Tibial artery (tissue), 4 donors: ENCODE measurements at regions of chr1 and their contacts with region 1.

Region 1: GRCh38 chr1:170471398-170472053 is 60.4 kb upstream of the GORAB start:
- DNase-seq: no peak
- H3K4me3 ChIP-seq: no peak overlapping the region
- H3K27ac ChIP-seq: no peak overlapping the region
- H3K4me1 ChIP-seq: peaks cover 0 to 8% (median 2%) of the 10 kb centered on the region in 4 donors
- H3K27me3 ChIP-seq: no peaks in the 10 kb centered on the region
- CTCF ChIP-seq: no peak

Region 2: DNA sequence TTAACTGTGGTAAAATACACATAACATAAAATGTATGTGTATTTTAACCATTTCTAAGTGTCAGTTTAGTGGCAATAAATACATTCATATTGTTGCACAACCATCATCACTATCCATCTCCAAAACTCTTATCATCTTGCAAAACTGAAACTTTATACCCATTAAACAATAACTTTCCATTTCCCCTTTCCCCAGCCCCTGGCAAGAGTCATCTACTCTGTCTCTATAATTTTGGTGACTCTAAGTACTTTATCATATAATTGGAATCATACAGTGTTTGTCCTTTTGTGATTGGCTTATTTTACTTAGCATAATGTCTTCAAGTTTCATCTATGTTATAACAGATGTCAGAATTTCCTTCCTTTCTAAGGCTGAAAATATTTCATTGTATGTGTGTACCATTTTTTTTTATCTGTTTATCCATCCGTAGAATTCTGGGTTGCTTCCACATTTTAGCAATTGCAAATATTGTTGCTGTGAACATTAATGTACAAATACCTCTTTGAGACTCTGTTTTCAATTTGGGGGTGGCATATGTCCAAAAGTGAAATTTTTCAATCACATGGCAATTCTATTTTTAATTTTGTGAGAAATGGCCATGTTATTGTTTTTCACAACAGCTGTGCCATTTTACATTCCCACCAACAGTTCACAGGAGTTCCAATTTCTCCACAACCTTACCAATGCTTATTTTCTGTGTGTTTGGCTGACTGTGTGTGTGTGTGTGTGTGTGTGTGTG is 93.5 kb before region 1 on chr1:
- intact Hi-C with region 1: loop called (anchors 5 kb)
- DNase-seq: no peak
- H3K4me3 ChIP-seq: no peak overlapping the region
- H3K27ac ChIP-seq: no peak overlapping the region
- H3K4me1 ChIP-seq: peaks cover 0 to 39% (median 6%) of the 10 kb centered on the region in 4 donors
- H3K27me3 ChIP-seq: no peaks in the 10 kb centered on the region
- CTCF ChIP-seq: no peak